Ascending aorta (tissue), 2 donors: ENCODE measurements at regions of chr5 and their contacts with region 1.

Region 1: GRCh38 chr5:53481887-53482716 is 1.7 kb downstream of the FST start:
- DNase-seq: peak; percentile 13 to 89
- H3K4me3 ChIP-seq: peak overlapping the region; percentile 63 to 98
- H3K27ac ChIP-seq: peak overlapping the region; percentile 53 to 56
- H3K4me1 ChIP-seq: peaks cover 0 to 5% of the 10 kb centered on the region in 2 donors
- H3K27me3 ChIP-seq: no peaks in the 10 kb centered on the region
- CTCF ChIP-seq: peak in 2 of 3 experiments; percentile 19 to 27

Region 2: GRCh38 chr5:53560506-53561191 is 78.5 kb after region 1 on chr5 and contains the start of gene NDUFS4:
- intact Hi-C with region 1: loop called (anchors 2 kb)
- DNase-seq: peak; percentile 16 to 89
- H3K4me3 ChIP-seq: peak within 1 kb of the TSS; percentile 78 to 83
- H3K27ac ChIP-seq: peak within 1 kb of the TSS; percentile 73 to 80
- H3K4me1 ChIP-seq: peaks cover 0 to 10% of the 10 kb centered on the region in 2 donors
- H3K27me3 ChIP-seq: no peaks in the 10 kb centered on the region
- CTCF ChIP-seq: no peak
- total RNA-seq, gene NDUFS4: 3.0 TPM

Region 3: DNA sequence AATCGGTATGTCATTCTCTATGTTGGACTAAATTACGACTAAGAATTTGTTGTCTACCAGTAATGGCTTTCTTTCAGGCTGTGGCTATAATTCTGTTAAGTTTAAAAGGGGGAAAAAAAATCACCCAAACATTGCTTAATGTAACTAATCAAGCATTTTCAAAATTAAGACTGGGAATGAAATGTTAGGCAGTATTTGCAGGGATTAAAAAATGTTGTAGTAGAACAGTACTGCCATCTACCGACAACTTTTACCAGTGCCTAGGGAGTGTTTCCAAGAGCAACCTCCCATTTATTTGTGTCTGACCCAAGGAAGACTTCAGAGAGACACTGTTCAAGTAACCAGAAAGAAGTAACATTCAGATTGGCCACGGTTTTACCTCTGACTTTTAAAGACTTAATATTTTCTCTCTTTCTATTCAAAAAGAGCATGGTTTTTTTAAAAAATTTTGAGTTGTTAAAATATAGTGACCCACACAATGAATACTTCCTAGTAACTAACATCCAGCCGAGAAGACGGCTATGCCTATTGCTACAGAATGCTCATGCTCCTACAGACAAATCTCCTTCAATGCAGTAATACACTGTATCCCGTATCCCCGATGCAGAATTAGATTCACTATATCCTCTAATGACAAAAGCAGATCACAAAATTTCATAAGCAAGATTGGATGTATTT is 735.9 kb after region 1 on chr5:
- intact Hi-C with region 1: loop called (anchors 2 kb)
- DNase-seq: peak in 1 of 2 donors; percentile 66
- H3K4me3 ChIP-seq: no peak overlapping the region
- H3K27ac ChIP-seq: no peak overlapping the region
- H3K4me1 ChIP-seq: no peaks in the 10 kb centered on the region
- H3K27me3 ChIP-seq: no peaks in the 10 kb centered on the region
- CTCF ChIP-seq: peak; percentile 52 to 78 (median 68)

Region 4: DNA sequence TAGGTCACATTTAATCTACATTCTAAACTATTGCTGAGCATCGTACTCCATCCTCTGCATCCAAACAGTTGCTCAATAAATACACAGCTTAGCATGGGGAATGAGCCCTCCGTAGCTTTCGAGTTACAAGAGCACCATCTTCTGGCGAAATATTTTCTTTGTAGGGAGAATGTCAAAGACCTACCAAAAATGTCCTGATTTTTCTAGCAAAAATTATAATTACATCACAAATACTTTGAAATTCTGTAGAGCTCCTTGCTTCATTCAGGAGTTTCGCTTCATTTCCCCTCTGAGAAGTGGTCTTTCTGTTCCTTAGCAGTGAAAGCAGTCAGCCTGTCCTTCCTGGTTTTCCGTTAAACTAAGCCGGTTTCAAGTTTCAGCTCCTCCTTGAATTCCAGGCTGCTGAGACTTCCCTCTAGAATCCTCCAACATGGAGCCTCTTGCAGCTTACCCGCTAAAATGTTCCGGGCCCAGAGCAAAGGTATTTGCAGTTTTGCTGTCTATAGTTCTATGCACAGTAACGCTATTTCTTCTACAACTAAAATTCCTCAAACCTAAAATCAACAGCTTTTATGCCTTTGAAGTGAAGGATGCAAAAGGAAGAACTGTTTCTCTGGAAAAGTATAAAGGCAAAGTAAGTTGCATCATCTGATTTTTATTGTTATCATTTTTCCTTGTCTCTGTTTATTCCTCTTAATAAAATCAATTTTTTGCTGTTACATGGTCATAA is 1677.8 kb after region 1 on chr5 and contains the start of gene GPX8:
- intact Hi-C with region 1: loop called (anchors 5 kb)
- DNase-seq: no peak
- H3K4me3 ChIP-seq: peak within 1 kb of the TSS; percentile 47 to 58
- H3K27ac ChIP-seq: peak within 1 kb of the TSS; percentile 54 to 67
- H3K4me1 ChIP-seq: no peaks in the 10 kb centered on the region
- H3K27me3 ChIP-seq: no peaks in the 10 kb centered on the region
- CTCF ChIP-seq: peak; percentile 46 to 71 (median 64)
- total RNA-seq, gene GPX8: 27.9 TPM